Right ventricle myocardium inferior (tissue), 1 donor: ENCODE measurements at regions of chr11 and their contacts with region 1.

Region 1: DNA sequence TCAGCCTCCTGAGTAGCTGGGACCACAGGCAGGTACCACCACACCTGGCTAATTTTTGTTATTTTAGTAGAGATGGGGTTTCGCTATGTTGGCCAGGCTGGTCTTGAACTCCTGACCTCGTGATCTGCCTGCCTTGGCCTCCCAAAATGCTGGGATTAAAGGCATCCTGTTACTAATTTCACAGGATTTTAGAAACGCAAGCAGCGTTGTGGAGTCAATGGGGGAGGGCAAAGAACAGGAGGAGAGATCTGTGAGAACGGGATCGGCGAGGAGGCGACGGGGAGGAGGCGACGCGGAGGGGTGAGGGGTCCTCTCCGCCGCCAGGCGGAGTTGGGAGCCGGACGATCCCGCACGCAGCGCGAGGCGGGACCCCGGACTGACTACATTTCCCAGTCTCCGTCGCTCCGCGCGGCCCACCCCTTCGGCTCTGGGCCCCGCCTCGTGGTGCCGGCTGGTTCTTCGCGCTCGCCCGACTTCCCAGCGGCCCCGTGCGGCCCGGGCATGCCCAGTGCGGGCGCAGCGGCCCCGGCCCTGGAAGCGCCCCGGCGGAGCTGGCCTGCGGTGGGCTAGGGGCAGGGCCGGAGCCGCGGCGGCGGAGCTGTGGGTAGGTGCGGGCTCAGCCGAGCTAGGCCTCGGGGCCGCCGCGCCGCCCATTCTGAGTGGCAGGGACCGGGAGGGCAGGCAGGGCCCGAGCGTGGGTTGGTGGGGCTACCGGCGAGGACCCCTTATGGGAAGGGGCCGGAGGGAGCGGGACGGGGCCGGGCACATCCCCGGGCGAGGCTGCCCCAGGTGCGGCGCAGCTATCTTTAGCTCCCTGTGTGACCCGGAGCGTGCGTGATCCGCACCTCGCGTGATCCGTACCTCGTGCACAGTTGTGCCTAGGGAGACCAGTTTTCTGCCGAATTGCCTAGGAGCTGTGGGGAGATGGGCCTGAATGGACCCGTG is at the start of gene EI24:
- DNase-seq: peak; percentile 95
- ATAC-seq: peak; percentile 100
- total RNA-seq, gene EI24: 58.1 TPM

Region 2: DNA sequence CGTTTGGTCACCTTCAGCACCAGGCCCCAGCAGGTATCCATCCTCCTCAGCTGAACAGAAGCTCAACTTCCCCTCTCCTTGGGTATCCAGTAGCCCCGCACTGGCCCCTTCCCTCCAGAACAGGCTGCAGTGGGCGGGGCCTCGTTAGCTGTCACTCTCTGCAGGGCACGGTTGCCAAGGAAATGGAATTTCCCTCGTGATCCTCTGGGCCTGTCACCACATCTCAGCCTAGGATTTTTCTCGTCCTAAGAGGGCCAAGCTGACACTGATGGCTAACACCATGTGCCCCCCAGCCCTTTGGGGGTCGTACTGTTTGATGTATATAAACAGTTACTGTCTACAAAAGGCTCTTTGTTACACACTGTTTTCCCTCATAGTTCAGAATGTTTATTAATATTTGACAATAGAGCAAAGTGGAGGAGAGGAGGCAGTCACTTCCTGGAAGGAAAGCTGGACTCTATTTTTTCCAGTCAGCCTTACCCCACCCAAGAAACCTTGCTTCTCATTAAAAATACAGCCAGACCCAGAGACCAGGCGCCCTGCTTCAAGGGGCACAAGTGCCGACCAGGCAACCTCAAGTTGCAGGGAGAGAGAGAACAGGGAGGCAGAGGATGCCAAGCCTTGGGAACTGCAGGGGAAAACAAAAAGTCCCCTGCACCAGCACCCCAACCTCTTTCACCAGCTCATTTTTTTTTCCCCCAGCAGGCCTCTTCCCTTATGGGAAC is 117.7 kb before region 1 on chr11:
- intact Hi-C with region 1: loop called (anchors 5 kb)
- DNase-seq: peak; percentile 87
- ATAC-seq: peak; percentile 87

Region 3: DNA sequence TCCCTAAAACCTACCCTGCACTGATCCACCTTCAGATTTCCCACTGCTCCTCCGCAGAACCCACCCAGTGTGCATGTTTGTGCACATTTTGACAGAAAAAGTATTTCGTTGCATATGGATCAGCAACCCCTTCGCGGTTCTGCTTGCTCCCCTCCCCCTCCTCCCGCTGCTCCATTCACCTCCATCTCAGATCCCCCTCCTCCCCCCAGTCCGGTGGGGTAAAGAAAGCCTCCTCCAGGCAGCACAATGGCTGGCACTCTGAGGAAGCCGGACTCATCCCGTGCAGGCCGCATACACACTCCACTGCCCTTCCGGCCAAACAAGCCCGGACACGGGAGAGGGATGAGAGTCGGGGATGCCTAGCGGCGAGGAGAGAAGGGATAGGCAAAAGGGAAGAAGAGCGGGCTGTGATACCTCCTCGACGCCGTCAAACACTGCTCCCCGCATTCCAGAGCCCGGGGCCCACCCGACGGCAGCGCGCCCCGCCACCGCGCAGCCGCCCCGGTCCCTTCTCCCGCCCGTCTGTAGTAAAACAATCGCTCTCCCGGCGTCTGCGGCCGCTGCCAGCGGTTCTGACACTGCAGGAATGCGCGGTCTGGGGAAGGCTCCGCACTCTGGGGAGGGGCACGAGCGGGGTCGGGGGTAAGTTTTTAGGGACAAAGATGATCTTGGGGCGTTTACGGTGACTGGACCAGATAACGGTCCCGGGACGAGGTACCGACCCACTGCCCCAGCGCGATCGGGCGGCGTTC is 74.1 kb before region 1 on chr11:
- intact Hi-C with region 1: loop called (anchors 2 kb)
- DNase-seq: peak; percentile 71
- ATAC-seq: peak; percentile 69

Region 4: DNA sequence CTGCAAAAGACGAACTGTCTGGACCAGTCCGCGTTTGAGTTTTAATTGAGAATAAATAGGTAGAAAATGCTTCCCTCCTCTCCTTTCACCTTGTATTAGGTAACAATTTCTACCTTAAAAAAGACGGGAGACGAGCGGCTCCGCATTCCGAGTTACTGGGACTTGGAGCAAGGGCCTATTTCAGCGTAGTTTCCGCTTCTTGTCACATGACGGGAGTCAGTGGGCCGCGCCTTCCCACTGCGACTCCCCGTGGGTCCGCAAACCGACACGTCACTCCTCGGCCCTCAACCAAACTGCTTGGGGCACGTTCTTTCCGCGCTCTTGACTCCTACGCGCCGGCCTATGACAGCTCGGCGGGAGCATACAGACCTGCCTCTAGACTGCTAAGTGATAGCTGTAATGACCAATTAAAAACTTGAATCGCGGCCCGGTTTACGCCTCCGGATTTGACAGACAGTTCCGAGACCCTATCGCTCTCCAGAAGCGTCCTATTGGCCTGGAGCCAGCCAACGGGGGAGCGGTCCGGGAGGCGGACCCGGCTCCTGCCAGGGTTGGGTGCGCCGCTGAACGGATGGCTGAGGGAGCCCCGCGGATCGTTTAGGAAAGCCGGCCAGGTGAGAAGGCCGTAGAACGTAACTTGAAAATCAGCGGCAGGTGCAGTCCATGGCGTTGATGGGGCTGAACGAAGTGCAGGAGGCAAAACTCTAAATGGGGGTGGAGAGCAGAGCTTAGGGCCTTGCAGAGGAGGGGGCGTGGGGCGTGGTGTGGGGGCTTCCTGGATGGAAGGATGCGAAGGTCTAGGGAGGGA is 23.3 kb after region 1 on chr11 and contains the start of gene STT3A:
- intact Hi-C with region 1: loop called (anchors 1 kb)
- DNase-seq: peak; percentile 100
- ATAC-seq: peak; percentile 99
- total RNA-seq, gene STT3A: 61.2 TPM

Region 5: DNA sequence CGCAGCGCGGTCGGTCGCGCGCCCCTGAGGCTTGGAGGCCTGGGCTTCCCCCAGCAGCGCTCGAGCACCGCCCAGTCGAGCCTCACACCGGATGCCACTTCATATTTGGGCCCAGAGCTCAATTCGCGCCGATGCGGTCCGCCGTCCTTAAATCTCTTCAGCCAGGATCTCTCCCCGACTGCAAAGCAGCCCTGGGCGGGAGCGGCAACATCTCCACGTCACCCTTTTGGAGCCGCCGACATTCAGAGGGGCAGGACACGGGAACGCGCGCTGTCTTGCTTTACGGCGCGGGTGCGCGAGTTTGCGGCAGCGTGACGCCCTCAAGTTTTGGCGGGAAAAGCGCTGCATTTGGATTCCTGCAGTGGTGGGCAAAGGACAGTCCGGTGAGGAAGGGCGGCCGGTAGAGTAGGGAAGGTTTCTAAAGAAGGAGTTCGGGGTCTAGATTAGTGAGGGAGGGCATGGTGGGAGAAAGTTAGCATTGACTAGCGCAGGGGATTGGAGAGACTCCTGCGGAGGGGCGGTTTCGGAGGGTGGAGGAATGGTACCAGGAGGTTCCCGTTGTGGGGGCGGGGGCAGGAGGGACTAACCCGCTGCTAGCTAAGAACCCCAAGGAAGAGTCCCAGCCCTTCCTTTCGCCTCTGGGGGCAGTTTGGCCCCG is 56.5 kb after region 1 on chr11:
- intact Hi-C with region 1: loop called (anchors 5 kb)
- DNase-seq: peak; percentile 92
- ATAC-seq: peak; percentile 97

Region 6: DNA sequence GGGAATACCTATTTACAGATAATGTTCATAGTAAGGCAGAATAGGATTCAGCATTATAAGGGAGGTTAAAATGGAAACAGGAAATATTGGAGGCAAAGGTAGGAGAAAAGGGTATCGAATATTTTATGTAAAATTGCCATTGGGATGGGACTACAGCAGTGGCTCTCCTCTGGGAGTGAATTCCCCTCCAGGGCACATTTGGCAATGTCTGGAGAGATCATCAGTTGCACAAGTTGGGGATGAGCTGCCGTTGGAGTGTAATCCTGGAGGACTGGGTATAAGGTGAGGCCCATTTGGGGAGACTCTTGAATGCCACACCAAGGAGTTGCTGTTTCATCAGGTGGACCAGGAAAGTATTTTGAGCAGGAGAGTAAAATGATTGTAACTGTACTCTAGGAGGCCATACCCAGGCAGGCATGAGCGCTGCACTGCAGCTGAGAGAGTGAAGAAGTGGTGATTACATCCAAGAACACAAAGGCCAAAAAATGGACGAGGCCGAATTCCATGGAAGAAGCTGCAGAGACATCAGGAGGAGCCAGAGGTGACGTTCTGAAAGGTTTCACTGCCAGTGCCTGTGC is 120.1 kb after region 1 on chr11:
- intact Hi-C with region 1: no loop called
- DNase-seq: no peak
- ATAC-seq: no peak